ENCODE measurements at regions of chr10 and their contacts with region 1.

Region 1: DNA sequence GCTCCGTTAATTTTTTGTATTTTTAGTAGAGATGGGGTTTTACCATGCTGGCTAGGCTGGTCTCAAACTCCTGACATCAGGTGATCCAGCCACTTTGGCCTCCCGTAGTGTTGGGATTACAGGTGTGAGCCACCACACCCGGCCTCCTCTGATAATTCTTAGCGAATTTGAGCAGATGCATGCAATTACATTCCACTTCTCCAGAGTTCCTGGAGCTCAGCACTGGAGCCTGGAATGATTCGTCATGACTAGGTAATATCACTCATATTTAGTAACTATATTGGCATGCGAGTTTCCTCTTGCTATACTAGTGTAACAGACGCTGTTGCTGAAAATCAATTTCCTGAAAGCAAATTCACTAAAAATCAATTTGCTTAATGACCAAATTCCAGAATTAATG is 86.8 kb downstream of the MKX start:
- DNase-seq: no peak
- H3K4me3 ChIP-seq: no peak overlapping the region
- H3K27ac ChIP-seq: no peak overlapping the region
- H3K4me1 ChIP-seq: no peaks in the 10 kb centered on the region
- H3K27me3 ChIP-seq: no peaks in the 10 kb centered on the region
- CTCF ChIP-seq: no peak
- POLR2A ChIP-seq: no peak

Region 2: DNA sequence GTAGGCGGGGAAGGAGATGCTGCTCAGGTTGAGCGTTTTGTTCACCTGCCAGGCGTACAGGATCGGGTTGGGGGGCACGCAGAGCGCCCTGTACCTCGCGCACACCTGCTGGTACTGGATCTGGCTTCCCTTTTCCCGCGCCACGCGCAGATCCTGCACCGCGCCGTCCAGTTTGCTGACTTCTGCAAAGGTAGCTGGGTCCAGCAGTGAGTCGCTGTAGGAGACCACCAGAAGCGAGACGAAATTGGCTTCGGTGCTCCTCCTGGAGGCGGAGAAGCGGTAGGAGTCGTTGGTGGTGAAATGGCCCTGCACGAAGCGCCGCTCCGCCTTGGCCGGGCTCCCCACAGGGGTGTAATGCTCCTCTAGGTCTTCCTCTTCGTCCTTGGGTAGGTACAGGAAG is 245.4 kb before region 1 on chr10:
- intact Hi-C with region 1: no loop called
- DNase-seq: no peak
- H3K4me3 ChIP-seq: no peak overlapping the region
- H3K27ac ChIP-seq: no peak overlapping the region
- H3K4me1 ChIP-seq: no peaks in the 10 kb centered on the region
- H3K27me3 ChIP-seq: no peaks in the 10 kb centered on the region
- CTCF ChIP-seq: no peak
- POLR2A ChIP-seq: no peak

Region 3: DNA sequence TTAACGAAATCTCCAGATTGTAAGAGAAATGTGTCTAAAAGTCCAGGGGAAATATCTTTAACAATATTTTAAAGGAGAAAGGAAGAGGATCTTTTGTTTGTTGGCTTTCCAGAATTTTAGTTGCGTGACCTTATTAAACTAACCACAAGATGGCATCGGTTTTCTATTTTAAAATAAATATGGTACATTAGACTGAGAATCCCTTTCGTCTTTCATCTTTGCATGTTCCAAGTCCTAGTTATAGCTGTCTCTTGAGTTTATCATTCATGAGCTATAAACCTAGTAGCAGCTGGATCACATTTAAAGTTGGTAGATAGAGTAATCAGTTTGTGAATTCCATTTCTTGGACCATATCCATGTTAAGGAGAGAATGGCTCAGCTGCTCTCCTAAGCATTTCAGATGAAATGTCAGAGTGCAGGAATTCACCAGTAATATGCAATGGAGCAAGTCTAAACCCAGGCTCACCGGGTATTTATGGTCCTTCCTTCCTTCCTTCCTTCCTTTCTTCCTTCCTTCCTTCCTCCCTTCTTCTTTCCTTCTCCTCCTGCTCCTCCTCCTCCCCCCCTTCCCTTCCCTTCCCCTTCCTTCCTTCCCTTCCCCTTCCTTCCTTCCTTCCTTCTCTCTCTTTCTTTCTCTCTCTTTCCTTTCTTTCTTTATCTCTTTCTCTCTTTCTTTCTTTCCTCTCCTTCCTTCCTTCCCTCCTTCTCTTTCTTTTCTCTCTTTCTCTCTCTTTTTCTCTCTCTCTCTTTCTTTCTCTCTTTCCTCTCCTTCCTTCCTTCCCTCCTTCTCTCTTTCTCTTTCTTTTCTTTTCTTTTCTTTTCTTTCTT is 212.5 kb before region 1 on chr10:
- intact Hi-C with region 1: loop called (anchors 10 kb)
- DNase-seq: no peak
- H3K4me3 ChIP-seq: no peak overlapping the region
- H3K27ac ChIP-seq: no peak overlapping the region
- H3K4me1 ChIP-seq: peaks cover 0 to 16% of the 10 kb centered on the region in 2 donors
- H3K27me3 ChIP-seq: no peaks in the 10 kb centered on the region
- CTCF ChIP-seq: peak in 3 of 6 experiments; percentile 49 to 61 (median 56)
- POLR2A ChIP-seq: no peak

Region 4: DNA sequence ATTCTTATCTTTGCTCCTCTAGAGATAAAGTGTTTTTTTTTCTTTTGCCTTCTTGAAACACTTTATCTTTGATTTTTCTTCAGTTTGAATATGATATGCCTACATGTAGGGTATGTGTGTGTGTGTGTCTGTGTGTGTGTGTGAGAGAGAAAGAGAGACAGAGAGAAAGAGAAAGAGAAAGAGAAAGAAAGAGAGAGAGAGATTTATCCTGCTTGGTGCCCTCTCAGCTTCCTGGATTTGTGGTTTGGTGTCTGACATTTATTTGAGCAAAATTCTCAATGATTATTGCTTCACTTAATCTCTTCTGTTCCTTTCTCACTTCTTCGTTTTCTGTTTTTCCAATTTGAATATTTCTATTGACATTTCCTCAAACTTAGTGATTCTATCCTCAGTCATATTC is 94.4 kb before region 1 on chr10:
- intact Hi-C with region 1: loop called (anchors 5 kb)
- DNase-seq: no peak
- H3K4me3 ChIP-seq: no peak overlapping the region
- H3K27ac ChIP-seq: no peak overlapping the region
- H3K4me1 ChIP-seq: no peaks in the 10 kb centered on the region
- H3K27me3 ChIP-seq: no peaks in the 10 kb centered on the region
- CTCF ChIP-seq: no peak
- POLR2A ChIP-seq: no peak

Region 5: GRCh38 chr10:27838361-27838760 is 179.6 kb after region 1 on chr10:
- intact Hi-C with region 1: no loop called
- DNase-seq: no peak
- H3K4me3 ChIP-seq: no peak overlapping the region
- H3K27ac ChIP-seq: no peak overlapping the region
- H3K4me1 ChIP-seq: no peaks in the 10 kb centered on the region
- H3K27me3 ChIP-seq: no peaks in the 10 kb centered on the region
- CTCF ChIP-seq: no peak
- POLR2A ChIP-seq: no peak